HEK293T (cell line): ENCODE measurements at regions of chr19 and their contacts with region 1.

Region 1: DNA sequence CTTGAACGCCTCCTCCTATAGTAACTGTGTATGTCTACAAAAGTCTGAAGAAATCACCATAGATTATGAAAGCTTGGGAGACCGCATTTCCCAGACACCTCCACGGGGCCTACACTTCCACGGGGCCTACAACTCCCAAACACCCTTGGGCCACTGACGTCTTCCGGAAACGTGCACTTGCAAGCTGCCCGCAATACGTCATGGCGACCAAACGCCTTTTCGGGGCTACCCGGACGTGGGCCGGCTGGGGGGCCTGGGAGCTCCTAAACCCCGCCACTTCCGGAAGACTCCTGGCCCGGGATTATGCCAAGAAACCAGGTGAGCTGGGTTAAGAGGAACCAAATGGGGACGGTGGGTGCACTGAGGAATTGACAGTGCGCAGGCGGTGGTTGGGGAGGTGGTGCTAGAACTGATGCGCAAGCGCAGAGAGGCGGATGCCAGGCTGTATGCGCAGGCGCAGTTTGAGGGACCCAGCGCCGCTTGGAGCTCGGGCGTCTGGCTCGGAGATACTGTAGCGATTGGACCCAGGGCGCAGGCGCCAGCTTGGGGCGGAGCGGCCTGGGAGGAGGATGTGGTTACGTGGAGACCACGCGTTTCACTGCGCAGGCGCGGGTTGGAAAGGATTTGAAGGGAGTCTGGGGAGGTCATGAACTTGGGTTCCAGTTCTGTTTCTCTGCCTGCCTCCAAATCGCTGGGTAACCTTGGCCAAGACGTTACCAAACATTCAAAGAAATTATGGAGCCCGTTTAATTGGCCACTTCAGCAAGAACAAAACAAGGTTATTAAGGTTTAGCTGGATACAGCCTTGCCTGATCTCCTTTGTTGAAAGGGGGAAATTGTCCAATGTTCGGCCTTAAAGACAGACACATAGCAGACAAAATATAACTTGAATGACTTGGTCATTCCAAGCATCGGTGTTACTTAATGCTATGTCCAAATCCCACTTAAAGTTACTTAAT is at the start of gene MRPL54:
- DNase-seq: peak; percentile 99

Region 2: GRCh38 chr19:3721131-3721886 is 41.5 kb before region 1 on chr19:
- CTCF ChIA-PET with region 1: interaction called, 3 read pairs
- POLR2A ChIA-PET with region 1: interaction called, 10 read pairs
- DNase-seq: peak; percentile 94

Region 3: DNA sequence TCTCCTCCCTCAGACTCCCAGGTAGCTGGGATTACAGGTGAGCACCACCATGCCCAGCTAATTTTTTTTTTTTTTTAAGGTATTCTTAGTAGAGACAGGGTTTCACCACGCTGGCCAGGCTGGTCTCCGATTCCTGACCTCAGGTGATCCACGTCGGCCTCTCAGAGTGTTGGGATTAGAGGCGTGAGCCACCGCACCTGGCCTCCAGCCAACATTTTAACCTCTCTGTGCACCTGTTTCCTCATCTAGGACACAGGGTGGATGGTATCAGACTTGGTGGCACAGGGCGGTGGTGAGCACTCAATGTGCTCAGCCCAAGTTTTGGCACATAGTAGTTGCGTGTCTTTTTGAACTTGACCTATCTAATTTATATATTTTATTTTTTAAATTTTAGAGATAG is 13.8 kb before region 1 on chr19:
- CTCF ChIA-PET with region 1: no interaction called
- POLR2A ChIA-PET with region 1: interaction called, 40 read pairs
- DNase-seq: no peak

Region 4: DNA sequence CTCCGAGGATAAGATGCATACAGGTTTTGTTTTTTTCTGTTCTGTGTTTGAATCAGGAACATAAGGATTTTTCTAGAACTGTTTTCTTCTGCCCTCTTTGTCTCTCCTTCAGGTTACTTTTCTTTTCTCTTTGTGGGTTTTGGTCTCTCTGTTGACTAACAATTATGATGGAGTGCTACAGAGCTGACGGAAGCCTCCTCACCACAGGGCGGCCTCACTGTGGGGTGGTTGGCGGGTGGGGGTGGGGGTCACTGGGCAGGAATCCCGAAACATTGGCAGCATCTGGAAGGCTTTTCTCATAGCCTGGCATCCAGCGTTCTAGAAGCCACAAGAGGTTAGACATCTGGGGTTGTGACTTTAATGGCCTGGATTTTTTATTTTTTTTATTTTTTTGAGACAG is 35.4 kb after region 1 on chr19:
- CTCF ChIA-PET with region 1: no interaction called
- POLR2A ChIA-PET with region 1: interaction called, 15 read pairs
- DNase-seq: no peak

Region 5: GRCh38 chr19:3970808-3971598 is 208.2 kb after region 1 on chr19 and contains the start of gene DAPK3:
- CTCF ChIA-PET with region 1: no interaction called
- POLR2A ChIA-PET with region 1: interaction called, 12 read pairs
- DNase-seq: peak; percentile 92

Region 6: DNA sequence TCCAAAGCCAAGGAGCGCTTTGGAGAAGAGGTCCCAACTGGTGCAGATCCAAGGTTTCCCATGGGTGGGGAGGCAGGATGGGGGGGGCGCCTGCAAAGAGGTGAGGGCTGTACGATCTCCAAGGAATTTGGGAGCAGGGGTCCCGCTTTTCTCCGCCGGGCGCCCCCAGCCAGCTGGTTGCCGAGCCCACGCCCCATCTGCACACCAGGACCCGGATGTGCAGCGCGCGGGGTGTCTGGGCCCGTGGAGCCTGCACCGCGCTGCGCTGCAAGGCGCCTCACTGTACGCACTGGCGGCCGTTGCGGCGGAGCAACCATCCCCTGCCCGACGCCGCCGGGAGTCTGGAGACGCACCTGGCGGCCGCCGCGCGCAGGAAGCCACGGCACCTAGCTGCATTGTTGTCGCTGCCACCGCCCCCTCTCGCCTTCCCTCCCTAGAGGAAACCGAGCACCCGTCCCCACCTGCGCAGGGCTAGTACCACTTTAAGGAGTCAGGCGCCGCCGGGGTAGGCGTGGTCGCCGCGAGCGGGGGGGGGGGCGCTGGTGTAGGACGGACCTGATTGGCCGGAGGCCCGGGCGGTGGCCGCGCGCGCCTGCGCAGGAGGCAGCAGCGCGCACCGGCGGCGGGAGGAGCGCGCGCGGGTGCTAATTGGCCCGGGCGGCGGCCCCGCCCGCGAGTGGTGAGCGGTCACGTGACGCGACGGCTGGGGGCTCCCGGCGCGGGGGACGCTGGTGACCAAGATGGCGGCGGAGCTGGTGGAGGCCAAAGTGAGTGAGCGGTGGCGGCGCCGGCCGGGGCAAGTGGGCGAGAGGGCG is 244.4 kb after region 1 on chr19 and contains the start of gene PIAS4:
- CTCF ChIA-PET with region 1: no interaction called
- POLR2A ChIA-PET with region 1: interaction called, 10 read pairs
- DNase-seq: peak; percentile 99